Naive thymus-derived CD4-positive, alpha-beta T cell (primary cell): ENCODE measurements at regions of chr2 and their contacts with region 1.

Region 1: GRCh38 chr2:130181325-130181879 is at the start of gene SMPD4:
- DNase-seq: peak; percentile 96 to 98 (median 98)
- ATAC-seq: peak; percentile 84
- H3K4me3 ChIP-seq: peak within 1 kb of the TSS; percentile 77
- H3K4me3 Mint-ChIP-seq: peak within 1 kb of the TSS; percentile 87 to 94 (median 91)
- H3K27ac ChIP-seq: peak within 1 kb of the TSS; percentile 91
- H3K27ac Mint-ChIP-seq: peak within 1 kb of the TSS; percentile 87 to 97 (median 95)
- H3K4me1 ChIP-seq: peaks cover 8 to 18% of the 10 kb centered on the region in 2 donors
- H3K4me1 Mint-ChIP-seq: peaks cover 18 to 35% (median 24%) of the 10 kb centered on the region in 7 donors
- H3K27me3 ChIP-seq: no peaks in the 10 kb centered on the region
- H3K27me3 Mint-ChIP-seq: no peaks in the 10 kb centered on the region
- total RNA-seq, gene SMPD4: 52.5 to 82.9 (median 59.8) TPM

Region 2: GRCh38 chr2:129877289-129877779 is 304.1 kb before region 1 on chr2:
- CTCF ChIA-PET with region 1: interaction called, 3 read pairs
- POLR2A ChIA-PET with region 1: interaction called, 7 read pairs
- intact Hi-C with region 1: loop called in 1 of 2 experiments (anchors 1 kb)
- DNase-seq: peak; percentile 61 to 82 (median 78)
- ATAC-seq: peak; percentile 95
- H3K4me3 ChIP-seq: peak overlapping the region; percentile 96
- H3K4me3 Mint-ChIP-seq: peak overlapping the region; percentile 86 to 99 (median 96)
- H3K27ac ChIP-seq: peak overlapping the region; percentile 78
- H3K27ac Mint-ChIP-seq: peak overlapping the region; percentile 77 to 97 (median 92)
- H3K4me1 ChIP-seq: peaks cover 5 to 7% of the 10 kb centered on the region in 2 donors
- H3K4me1 Mint-ChIP-seq: peaks cover 6 to 18% (median 13%) of the 10 kb centered on the region in 7 donors
- H3K27me3 ChIP-seq: no peaks in the 10 kb centered on the region
- H3K27me3 Mint-ChIP-seq: peaks cover 0 to 2% (median 0%) of the 10 kb centered on the region in 5 donors

Region 3: DNA sequence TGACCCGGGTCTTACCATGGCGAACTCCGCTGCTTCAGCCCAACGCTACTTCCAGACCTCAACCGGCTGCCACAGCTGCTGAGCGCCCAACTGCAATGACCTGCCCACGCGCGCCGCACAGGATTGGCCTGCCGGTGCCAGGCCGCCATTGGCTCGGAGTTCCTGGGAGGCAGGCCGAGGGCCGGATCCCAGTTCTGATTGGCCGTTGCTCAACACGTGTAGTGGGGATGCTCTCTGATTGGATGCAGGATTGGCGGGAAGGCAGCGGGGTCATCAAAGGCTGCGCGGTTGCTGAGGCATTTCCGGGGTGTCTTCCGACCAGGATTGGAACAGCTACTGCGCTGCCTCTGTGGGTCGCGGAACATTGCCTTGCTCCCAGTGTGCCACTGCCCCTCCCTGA is 16.9 kb after region 1 on chr2 and contains the start of gene TUBA3E:
- CTCF ChIA-PET with region 1: no interaction called
- POLR2A ChIA-PET with region 1: no interaction called
- intact Hi-C with region 1: no loop called
- DNase-seq: no peak
- ATAC-seq: no peak
- H3K4me3 ChIP-seq: no peak within 1 kb of the TSS
- H3K4me3 Mint-ChIP-seq: no peak within 1 kb of the TSS
- H3K27ac ChIP-seq: no peak within 1 kb of the TSS
- H3K27ac Mint-ChIP-seq: no peak within 1 kb of the TSS
- H3K4me1 ChIP-seq: no peaks in the 10 kb centered on the region
- H3K4me1 Mint-ChIP-seq: no peaks in the 10 kb centered on the region
- H3K27me3 ChIP-seq: no peaks in the 10 kb centered on the region
- H3K27me3 Mint-ChIP-seq: peaks cover 0 to 9% (median 0%) of the 10 kb centered on the region in 5 donors
- total RNA-seq, gene TUBA3E: not detected

Region 4: DNA sequence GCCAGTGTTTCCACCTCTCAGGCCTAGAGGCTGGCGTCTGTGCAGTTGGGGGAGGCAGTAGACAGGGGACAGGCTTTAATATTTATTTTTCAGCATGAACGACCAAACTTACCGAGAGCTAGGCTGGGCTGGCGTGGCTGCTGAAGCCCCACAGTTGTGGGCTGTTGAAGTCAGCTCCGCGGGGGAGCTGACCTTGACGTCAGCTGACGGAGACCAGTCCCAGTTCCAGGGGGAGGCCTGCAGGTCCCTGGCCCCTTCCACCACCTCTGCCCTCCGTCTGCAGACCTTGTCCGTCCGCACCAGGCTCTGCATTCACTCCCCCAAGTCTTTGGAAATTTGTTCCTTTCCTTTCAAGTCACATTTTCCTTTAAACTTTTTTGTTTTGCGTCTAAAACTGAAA is 50.3 kb after region 1 on chr2:
- CTCF ChIA-PET with region 1: no interaction called
- POLR2A ChIA-PET with region 1: no interaction called
- intact Hi-C with region 1: loop called in 1 of 2 experiments (anchors 1 kb)
- DNase-seq: no peak
- ATAC-seq: no peak
- H3K4me3 ChIP-seq: no peak overlapping the region
- H3K4me3 Mint-ChIP-seq: peak overlapping the region in 1 of 10 donors; percentile 14
- H3K27ac ChIP-seq: no peak overlapping the region
- H3K27ac Mint-ChIP-seq: no peak overlapping the region
- H3K4me1 ChIP-seq: no peaks in the 10 kb centered on the region
- H3K4me1 Mint-ChIP-seq: no peaks in the 10 kb centered on the region
- H3K27me3 ChIP-seq: no peaks in the 10 kb centered on the region
- H3K27me3 Mint-ChIP-seq: peaks cover 2 to 28% (median 7%) of the 10 kb centered on the region in 5 donors

Region 5: GRCh38 chr2:130372055-130372832 is 190.8 kb after region 1 on chr2:
- CTCF ChIA-PET with region 1: no interaction called
- POLR2A ChIA-PET with region 1: interaction called, 3 read pairs
- intact Hi-C with region 1: loop called in 1 of 2 experiments (anchors 1 kb)
- DNase-seq: peak; percentile 49 to 92 (median 71)
- ATAC-seq: peak; percentile 86
- H3K4me3 ChIP-seq: peak overlapping the region; percentile 83
- H3K4me3 Mint-ChIP-seq: peak overlapping the region; percentile 87 to 99 (median 94)
- H3K27ac ChIP-seq: peak overlapping the region; percentile 71
- H3K27ac Mint-ChIP-seq: peak overlapping the region; percentile 88 to 97 (median 95)
- H3K4me1 ChIP-seq: peaks cover 25 to 34% of the 10 kb centered on the region in 2 donors
- H3K4me1 Mint-ChIP-seq: peaks cover 47 to 69% (median 65%) of the 10 kb centered on the region in 7 donors
- H3K27me3 ChIP-seq: no peaks in the 10 kb centered on the region
- H3K27me3 Mint-ChIP-seq: no peaks in the 10 kb centered on the region

Region 6: GRCh38 chr2:130385709-130386108 is 204.3 kb after region 1 on chr2:
- CTCF ChIA-PET with region 1: no interaction called
- POLR2A ChIA-PET with region 1: no interaction called
- intact Hi-C with region 1: no loop called
- DNase-seq: no peak
- ATAC-seq: peak; percentile 20
- H3K4me3 ChIP-seq: no peak overlapping the region
- H3K4me3 Mint-ChIP-seq: no peak overlapping the region
- H3K27ac ChIP-seq: no peak overlapping the region
- H3K27ac Mint-ChIP-seq: peak overlapping the region in 1 of 9 donors; percentile 9
- H3K4me1 ChIP-seq: peaks cover 2 to 4% of the 10 kb centered on the region in 2 donors
- H3K4me1 Mint-ChIP-seq: peaks cover 6 to 15% (median 9%) of the 10 kb centered on the region in 7 donors
- H3K27me3 ChIP-seq: no peaks in the 10 kb centered on the region
- H3K27me3 Mint-ChIP-seq: no peaks in the 10 kb centered on the region

Region 7: DNA sequence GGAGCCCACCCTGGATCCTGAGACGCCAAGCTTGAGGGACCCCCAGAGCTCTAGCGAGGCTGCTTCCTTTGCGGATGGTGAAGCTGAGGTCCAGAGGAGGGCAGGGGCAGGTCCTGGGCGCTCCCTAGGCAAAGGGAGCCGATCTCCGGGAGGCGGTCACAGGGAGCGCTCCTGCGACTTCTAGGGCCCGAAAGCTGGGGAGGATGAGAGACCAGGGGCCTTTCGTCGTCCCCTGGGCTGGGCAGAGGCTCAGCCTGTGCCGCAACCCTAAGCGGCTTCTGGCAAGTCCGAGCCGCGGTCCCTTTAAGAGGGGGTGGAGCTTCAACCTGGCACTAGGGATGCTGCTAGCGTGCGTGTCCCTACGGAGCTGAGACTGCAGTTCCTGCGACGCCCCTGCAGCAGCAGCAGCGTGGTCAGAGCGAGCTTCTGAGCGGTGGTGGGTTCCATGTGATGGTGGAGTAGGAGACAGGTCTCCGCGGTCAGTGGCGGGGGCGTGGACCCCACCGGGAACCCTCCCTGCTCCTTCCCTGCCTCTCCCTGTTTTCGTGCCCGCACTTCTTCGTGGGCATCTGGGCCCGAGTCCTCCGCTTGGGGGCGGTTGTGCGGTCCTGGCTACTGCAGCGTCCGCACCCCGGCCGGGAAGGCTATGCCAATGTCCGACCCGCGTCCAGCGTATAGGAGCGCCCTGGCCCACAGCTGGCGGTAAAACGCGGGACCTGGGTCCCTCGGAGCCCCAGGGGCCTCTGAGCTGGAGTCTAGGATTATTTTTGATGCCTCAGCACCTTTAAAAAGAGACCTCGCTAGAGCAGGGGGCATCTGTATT is 1500.9 kb after region 1 on chr2:
- CTCF ChIA-PET with region 1: no interaction called
- POLR2A ChIA-PET with region 1: no interaction called
- intact Hi-C with region 1: loop called in 1 of 2 experiments (anchors 10 kb)
- DNase-seq: peak in 8 of 9 donors; percentile 47 to 73 (median 61)
- ATAC-seq: peak; percentile 95
- H3K4me3 ChIP-seq: peak overlapping the region; percentile 84
- H3K4me3 Mint-ChIP-seq: peak overlapping the region; percentile 79 to 93 (median 89)
- H3K27ac ChIP-seq: peak overlapping the region; percentile 52
- H3K27ac Mint-ChIP-seq: peak overlapping the region; percentile 67 to 92 (median 78)
- H3K4me1 ChIP-seq: no peaks in the 10 kb centered on the region
- H3K4me1 Mint-ChIP-seq: peaks cover 13 to 50% (median 29%) of the 10 kb centered on the region in 7 donors
- H3K27me3 ChIP-seq: no peaks in the 10 kb centered on the region
- H3K27me3 Mint-ChIP-seq: peaks cover 0 to 5% (median 0%) of the 10 kb centered on the region in 5 donors